Cardiac septum (tissue), 1 donor: ENCODE measurements at regions of chr5 and their contacts with region 1.

Region 1: GRCh38 chr5:5886812-5887486 is 464.5 kb downstream of the ICE1 start:
- DNase-seq: no peak

Region 2: DNA sequence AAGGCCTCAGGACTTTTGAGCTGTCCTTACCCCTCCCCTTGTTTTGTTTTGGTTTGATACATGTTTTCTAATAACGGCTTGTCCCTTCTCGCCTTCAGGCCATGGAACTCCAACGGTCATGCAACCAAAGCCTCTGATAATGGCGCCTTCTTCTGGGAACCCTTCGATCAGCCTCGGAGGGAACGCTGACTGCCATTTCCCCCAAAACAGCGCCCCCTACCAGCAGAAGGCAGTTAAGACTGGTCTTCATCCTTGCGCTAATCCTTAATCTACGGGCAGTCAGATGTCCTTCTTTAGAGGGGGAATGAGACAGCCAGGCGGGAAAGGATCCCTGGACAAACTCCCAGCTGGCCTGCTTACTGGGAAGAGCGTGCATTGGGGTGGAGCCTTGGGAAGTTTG is 187.9 kb before region 1 on chr5:
- intact Hi-C with region 1: loop called (anchors 10 kb)
- DNase-seq: no peak

Region 3: DNA sequence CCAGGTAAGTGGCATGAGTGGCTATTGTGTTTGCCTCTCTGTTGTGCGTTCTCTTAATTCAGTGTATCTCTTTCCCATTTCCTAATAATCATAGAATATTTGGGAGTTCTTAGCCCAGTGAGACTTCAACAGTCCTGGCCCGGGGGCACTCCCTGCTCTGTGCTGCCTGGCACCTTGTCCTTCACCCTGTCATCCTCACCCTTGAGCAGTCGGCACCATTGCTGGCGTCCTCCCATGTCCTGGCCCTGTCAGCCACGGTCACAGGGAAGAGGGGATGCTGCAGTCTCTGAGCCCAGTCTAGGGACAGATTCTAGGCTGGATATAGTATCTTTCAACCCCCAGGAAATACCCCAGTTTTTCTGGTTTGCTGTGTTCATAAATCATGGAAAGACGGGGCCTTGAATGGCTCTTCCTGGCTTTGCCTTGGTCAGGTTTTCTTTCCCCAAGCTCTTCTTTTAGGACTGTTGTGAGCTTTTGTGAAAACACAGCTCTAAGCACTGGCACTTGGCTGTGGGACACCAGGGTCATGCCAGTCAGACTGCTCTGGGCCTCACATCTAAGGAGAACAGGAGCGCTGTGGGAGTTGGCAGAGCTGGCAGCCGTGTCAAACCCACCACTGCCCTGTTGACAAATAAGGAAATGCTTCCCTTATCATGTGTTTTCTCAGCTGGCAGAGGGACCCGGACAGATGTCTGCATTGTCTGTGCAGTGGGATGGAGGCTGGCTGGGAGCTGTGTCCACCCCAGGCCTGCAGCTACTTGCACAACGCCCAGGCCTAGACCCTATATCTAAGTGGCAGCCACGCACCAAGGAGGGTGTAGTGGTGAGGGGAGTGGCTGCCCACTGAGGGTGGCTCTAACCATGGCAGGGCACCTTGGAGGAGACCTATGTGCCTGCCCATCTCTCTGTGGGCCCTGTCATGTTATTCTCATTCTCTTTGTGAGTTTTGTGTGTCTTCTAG is 85.9 kb before region 1 on chr5:
- intact Hi-C with region 1: no loop called
- DNase-seq: no peak

Region 4: GRCh38 chr5:5826911-5827310 is 60.0 kb before region 1 on chr5:
- intact Hi-C with region 1: no loop called
- DNase-seq: no peak